Activated naive CD4-positive, alpha-beta T cell treated with anti-CD3 and anti-CD28 coated beads for 36 hours (primary cell): ENCODE measurements at regions of chr3 and their contacts with region 1.

Region 1: DNA sequence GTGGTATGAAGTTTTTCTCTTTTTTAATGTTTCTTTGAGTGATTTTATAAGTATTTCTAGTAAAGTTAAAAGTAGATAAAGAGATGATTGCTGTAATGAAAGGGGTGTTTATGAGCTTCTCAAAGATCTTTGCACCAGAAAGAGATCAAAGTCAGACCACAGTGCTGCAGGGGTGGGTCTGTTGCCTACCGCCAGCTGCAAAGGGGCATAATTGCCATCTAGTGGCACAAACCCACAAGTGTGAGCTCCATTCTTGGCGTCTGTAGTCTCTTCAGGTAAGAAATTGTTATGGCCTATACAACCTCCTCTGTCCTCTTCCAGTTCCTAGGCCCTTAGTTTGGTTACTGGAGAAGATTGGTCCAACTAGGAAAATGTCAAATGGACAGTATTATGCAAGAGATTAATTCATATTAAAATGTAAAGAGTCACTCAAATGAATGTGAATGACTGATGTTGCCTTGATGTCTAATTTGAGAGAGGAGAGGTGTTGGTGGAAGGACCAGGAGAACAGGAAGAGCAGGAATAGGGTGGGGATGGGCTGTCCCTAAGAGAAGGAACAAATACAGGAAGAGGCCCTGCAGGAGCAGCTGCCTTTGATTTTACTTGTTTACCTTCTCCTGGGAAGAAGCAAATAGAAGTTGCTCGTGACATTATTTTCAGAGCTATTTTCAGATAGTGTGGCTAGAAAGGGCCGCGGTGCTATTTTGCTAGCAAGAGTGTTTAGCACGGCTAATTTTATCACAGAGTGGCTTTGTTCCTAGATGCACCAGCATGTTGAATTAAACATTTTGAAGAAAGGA is 53.0 kb upstream of the GSK3B start:
- DNase-seq: peak; percentile 61
- H3K4me3 Mint-ChIP-seq: no peak overlapping the region
- H3K27ac Mint-ChIP-seq: no peak overlapping the region
- H3K4me1 Mint-ChIP-seq: peaks cover 25% of the 10 kb centered on the region
- H3K27me3 Mint-ChIP-seq: no peaks in the 10 kb centered on the region

Region 2: GRCh38 chr3:119819806-119820205 is 327.5 kb before region 1 on chr3:
- CTCF ChIA-PET with region 1: interaction called, 4 read pairs
- intact Hi-C with region 1: loop called (anchors 2 kb)
- DNase-seq: no peak
- H3K4me3 Mint-ChIP-seq: no peak overlapping the region
- H3K27ac Mint-ChIP-seq: no peak overlapping the region
- H3K4me1 Mint-ChIP-seq: peaks cover 4% of the 10 kb centered on the region
- H3K27me3 Mint-ChIP-seq: no peaks in the 10 kb centered on the region

Region 3: GRCh38 chr3:119829420-119829819 is 317.9 kb before region 1 on chr3:
- CTCF ChIA-PET with region 1: interaction called, 3 read pairs
- intact Hi-C with region 1: loop called (anchors 2 kb)
- DNase-seq: no peak
- H3K4me3 Mint-ChIP-seq: no peak overlapping the region
- H3K27ac Mint-ChIP-seq: no peak overlapping the region
- H3K4me1 Mint-ChIP-seq: no peaks in the 10 kb centered on the region
- H3K27me3 Mint-ChIP-seq: no peaks in the 10 kb centered on the region

Region 4: DNA sequence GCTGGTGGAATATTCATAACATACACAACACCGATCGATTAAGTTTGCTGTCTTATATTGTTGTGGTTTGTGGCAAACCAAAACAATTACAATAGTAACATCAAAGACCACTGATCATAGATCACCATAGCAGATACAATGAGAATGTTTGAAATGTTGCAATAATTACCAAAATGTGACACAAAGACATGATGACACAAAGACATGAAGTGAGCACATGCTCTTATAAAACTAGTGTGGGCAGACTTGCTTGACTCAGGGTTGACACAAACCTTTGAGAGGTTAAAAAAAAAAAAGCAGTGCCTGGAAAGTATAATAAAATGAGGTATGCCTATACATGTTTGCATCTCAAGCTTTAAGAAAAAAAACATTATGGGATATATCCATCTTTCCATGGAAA is 235.1 kb before region 1 on chr3:
- CTCF ChIA-PET with region 1: interaction called, 6 read pairs
- intact Hi-C with region 1: loop called (anchors 1 kb)
- DNase-seq: no peak
- H3K4me3 Mint-ChIP-seq: no peak overlapping the region
- H3K27ac Mint-ChIP-seq: peak overlapping the region; percentile 77
- H3K4me1 Mint-ChIP-seq: peaks cover 33% of the 10 kb centered on the region
- H3K27me3 Mint-ChIP-seq: no peaks in the 10 kb centered on the region

Region 5: GRCh38 chr3:120039642-120040610 is 107.3 kb before region 1 on chr3:
- CTCF ChIA-PET with region 1: no interaction called
- intact Hi-C with region 1: loop called (anchors 2 kb)
- DNase-seq: no peak
- H3K4me3 Mint-ChIP-seq: no peak overlapping the region
- H3K27ac Mint-ChIP-seq: no peak overlapping the region
- H3K4me1 Mint-ChIP-seq: peaks cover 20% of the 10 kb centered on the region
- H3K27me3 Mint-ChIP-seq: no peaks in the 10 kb centered on the region